ENCODE measurements at regions of chr6 and their contacts with region 1.

Region 1: GRCh38 chr6:129598244-129599187 is 111.5 kb downstream of the ARHGAP18 start:
- H3K4me3 ChIP-seq: no peak overlapping the region
- H3K27ac ChIP-seq: no peak overlapping the region
- H3K4me1 ChIP-seq: no peaks in the 10 kb centered on the region; the same call in 1 of the 2 replicates
- CTCF ChIP-seq: peak; percentile 60

Region 2: GRCh38 chr6:129615020-129615419 is 16.5 kb after region 1 on chr6:
- CTCF ChIA-PET with region 1: interaction called, 51 read pairs
- POLR2A ChIA-PET with region 1: no interaction called
- H3K4me3 ChIP-seq: no peak overlapping the region
- H3K27ac ChIP-seq: no peak overlapping the region
- H3K4me1 ChIP-seq: no peaks in the 10 kb centered on the region; the same call in 1 of the 2 replicates
- CTCF ChIP-seq: no peak

Region 3: GRCh38 chr6:129709769-129710449 is 111.4 kb after region 1 on chr6 and contains the start of gene ARHGAP18:
- CTCF ChIA-PET with region 1: interaction called, 17 read pairs
- POLR2A ChIA-PET with region 1: no interaction called
- H3K4me3 ChIP-seq: peak within 1 kb of the TSS; percentile 39
- H3K27ac ChIP-seq: peak within 1 kb of the TSS; percentile 37
- H3K4me1 ChIP-seq: peaks cover 3% of the 10 kb centered on the region; the same call in 1 of the 2 replicates
- CTCF ChIP-seq: no peak

Region 4: DNA sequence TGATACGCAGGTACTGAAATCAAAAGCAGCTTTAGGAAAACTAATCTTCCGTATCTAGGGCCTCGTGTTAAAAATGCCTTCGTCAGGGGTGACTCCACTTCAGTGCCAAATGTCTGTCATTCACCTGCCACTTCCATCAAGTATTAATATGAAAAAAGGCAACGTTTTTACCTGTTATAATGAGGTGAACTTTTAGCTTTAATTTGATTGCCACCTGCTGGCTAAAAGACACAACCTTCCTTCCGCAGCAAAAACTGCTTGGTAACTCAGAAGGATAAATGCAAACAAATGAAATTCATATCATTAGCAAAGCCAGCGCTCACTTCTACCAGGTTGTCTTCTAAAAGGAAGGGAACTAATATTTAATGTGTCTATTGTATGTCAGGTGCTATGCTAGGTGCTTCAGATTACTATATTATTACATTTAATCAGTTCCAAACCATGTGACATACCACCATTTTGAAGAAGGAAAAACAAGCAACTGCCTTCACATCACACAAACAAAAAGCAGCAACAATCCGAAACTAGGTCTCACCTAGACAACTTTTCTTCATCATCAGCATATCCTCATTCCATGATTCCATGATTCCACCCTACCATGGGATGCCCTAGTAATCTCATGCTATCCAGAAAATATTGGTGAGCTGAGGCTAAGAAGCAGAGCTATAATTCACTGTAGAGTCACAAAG is 132.1 kb after region 1 on chr6:
- CTCF ChIA-PET with region 1: interaction called, 205 read pairs
- POLR2A ChIA-PET with region 1: no interaction called
- H3K4me3 ChIP-seq: no peak overlapping the region
- H3K27ac ChIP-seq: no peak overlapping the region
- H3K4me1 ChIP-seq: no peaks in the 10 kb centered on the region
- CTCF ChIP-seq: 0 out of 2 replicates have a peak, but pooled peaks have one; percentile 32

Region 5: GRCh38 chr6:129766959-129767728 is 168.6 kb after region 1 on chr6:
- CTCF ChIA-PET with region 1: interaction called, 13 read pairs
- POLR2A ChIA-PET with region 1: no interaction called
- H3K4me3 ChIP-seq: peak overlapping the region; percentile 52
- H3K27ac ChIP-seq: no peak overlapping the region
- H3K4me1 ChIP-seq: peaks cover 3% of the 10 kb centered on the region
- CTCF ChIP-seq: no peak

Region 6: GRCh38 chr6:129938249-129939020 is 339.9 kb after region 1 on chr6:
- CTCF ChIA-PET with region 1: interaction called, 18 read pairs
- POLR2A ChIA-PET with region 1: no interaction called
- H3K4me3 ChIP-seq: no peak overlapping the region
- H3K27ac ChIP-seq: no peak overlapping the region
- H3K4me1 ChIP-seq: no peaks in the 10 kb centered on the region
- CTCF ChIP-seq: no peak

Region 7: GRCh38 chr6:130020907-130021629 is 422.6 kb after region 1 on chr6:
- CTCF ChIA-PET with region 1: interaction called, 20 read pairs
- POLR2A ChIA-PET with region 1: no interaction called
- H3K4me3 ChIP-seq: peak overlapping the region; percentile 70
- H3K27ac ChIP-seq: no peak overlapping the region
- H3K4me1 ChIP-seq: no peaks in the 10 kb centered on the region
- CTCF ChIP-seq: peak; percentile 73; the same call in 1 of the 2 replicates

Region 8: DNA sequence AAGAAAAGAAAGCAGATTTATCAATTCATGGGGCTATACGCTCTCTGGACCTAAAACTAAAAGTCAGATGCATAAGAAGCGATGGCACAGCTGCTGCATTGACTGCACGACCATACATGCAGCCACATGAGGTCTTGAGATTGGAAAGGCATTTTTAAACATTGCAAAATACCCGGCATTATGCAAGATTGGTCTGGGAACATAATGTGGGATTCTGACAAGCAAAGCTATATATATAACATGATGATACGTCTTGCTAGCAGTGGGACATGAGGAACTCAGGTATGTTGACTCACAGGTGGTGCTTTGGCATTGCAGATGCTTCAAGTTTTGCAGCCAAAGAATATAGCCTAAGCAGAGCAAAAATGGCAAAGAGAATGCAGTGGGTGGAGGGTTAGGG is 569.1 kb after region 1 on chr6:
- CTCF ChIA-PET with region 1: no interaction called
- POLR2A ChIA-PET with region 1: no interaction called
- H3K4me3 ChIP-seq: no peak overlapping the region
- H3K27ac ChIP-seq: no peak overlapping the region
- H3K4me1 ChIP-seq: no peaks in the 10 kb centered on the region
- CTCF ChIP-seq: no peak